ENCODE measurements at regions of chr6 and their contacts with region 1.

Region 1: DNA sequence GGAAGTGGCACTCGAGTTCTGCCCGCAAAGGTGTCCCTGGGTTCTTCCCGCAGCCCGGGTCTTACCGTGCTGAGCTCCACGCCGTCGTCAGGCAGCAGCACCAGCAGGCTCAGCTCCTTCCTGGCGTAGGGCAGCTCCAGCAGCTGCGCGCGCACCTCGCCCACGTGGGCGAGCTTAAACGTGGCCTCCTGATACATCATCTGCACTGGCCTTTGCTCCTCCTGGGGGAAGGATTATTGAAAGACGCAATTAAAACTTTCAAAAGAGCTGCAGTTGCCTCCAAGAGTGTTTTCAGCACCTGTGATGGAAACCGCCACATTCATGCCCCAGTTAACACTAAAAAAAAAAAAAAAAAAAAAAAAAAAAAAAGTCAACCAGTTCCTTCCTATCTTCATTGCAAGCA is 11.3 kb downstream of the SERPINB9 start:
- DNase-seq: peak; percentile 99
- H3K4me3 ChIP-seq: peak overlapping the region; percentile 73
- H3K27ac ChIP-seq: peak overlapping the region; percentile 97
- H3K4me1 ChIP-seq: peaks cover 91% of the 10 kb centered on the region
- CTCF ChIP-seq: no peak

Region 2: DNA sequence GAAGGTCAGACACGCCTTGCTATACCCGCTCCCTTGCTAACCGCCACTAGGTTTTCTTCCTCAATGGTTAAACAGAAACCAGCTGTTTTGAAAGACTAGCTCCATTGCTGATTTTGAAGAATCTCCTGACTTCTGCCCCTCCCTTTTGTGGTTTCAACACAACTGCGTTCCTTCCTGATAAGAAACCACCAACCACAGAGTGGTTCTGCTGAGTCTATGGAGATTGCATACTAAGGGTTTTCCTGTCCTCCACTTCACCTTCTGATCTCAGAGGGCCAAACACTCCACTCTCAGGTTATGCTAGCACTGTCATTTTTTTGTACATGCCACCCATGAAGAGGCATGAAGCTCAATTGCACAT is 348.9 kb before region 1 on chr6:
- CTCF ChIA-PET with region 1: no interaction called
- POLR2A ChIA-PET with region 1: no interaction called
- intact Hi-C with region 1: no loop called
- DNase-seq: no peak
- H3K4me3 ChIP-seq: no peak overlapping the region
- H3K27ac ChIP-seq: no peak overlapping the region
- H3K4me1 ChIP-seq: no peaks in the 10 kb centered on the region
- CTCF ChIP-seq: no peak

Region 3: DNA sequence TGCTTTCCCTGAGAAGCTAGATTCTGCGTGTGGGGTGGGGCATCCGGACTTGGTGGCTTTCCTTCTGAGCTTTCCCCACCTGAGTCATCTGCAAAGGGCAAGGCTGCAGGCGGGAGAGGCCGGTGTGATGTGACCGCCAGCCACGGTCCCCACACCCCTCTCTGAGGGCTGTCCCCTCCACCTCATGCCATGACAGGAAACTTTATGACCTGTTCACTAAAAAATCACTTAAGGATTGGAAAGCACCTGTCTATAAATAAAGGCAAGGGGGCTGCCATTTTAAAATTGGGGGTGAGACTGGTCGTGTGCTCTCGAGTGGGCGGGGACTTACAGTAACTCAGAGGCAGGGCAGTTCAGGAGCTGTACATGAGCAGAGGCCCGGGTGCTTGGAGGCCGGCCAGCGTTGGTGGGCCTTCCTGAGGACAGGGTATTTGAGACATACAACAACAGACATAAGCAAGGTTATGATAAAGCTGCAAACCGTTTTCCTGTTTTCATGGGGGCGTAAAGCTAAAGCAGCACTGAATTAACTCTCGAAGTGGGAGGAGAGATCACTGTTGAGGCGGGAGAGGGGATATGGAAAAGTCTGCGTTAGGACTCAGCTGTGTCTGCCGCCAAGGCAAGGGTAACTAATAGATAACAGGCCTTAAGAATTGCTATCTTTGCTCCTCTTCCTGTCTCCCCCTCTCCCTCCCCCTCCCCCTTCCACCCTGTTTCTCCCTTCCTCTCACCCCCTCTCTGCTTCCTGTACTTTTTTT is 34.0 kb before region 1 on chr6:
- CTCF ChIA-PET with region 1: no interaction called
- POLR2A ChIA-PET with region 1: interaction called, 18 read pairs
- intact Hi-C with region 1: loop called (anchors 1 kb)
- DNase-seq: peak; percentile 70
- H3K4me3 ChIP-seq: peak overlapping the region; percentile 39
- H3K27ac ChIP-seq: peak overlapping the region; percentile 99
- H3K4me1 ChIP-seq: peaks cover 96% of the 10 kb centered on the region
- CTCF ChIP-seq: no peak

Region 4: DNA sequence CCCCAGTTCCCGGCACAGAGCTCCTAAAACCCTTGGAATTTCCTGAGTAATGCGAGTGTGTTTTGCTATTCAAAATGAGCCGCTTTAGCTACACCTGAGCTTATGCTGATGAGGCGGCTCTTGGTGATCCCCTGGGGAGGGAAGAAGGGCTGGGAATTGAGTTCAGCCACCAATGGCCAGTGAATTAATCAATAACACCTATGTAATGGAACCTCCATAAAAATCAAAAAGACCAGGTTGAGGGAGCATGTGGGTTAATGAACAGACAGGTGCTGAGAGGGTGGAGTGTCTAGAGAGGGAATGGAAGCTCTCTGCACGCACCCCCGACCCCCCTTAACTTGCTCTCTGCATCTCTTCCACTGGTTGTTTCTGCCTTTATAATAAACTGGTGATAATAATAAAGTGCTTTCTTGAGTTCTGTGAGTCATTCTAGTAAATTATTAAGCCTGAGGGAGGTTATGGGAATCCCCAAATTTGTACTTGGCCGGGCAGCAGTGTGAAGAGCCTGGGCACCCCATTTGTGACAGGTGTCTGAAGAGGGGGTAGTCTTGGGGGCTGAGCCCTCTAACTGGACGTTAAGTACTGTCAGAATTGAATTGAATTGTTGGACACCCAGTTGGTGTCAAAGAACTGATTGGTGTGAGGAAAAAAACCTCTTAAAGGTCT is 25.5 kb before region 1 on chr6:
- CTCF ChIA-PET with region 1: interaction called, 4 read pairs
- POLR2A ChIA-PET with region 1: interaction called, 18 read pairs
- intact Hi-C with region 1: loop called (anchors 1 kb)
- DNase-seq: no peak
- H3K4me3 ChIP-seq: peak overlapping the region; percentile 28
- H3K27ac ChIP-seq: peak overlapping the region; percentile 99
- H3K4me1 ChIP-seq: peaks cover 78% of the 10 kb centered on the region
- CTCF ChIP-seq: no peak

Region 5: GRCh38 chr6:2876210-2877056 is 15.3 kb before region 1 on chr6:
- CTCF ChIA-PET with region 1: interaction called, 3 read pairs
- POLR2A ChIA-PET with region 1: interaction called, 23 read pairs
- intact Hi-C with region 1: no loop called
- DNase-seq: peak; percentile 58
- H3K4me3 ChIP-seq: peak overlapping the region; percentile 67
- H3K27ac ChIP-seq: peak overlapping the region; percentile 79
- H3K4me1 ChIP-seq: peaks cover 88% of the 10 kb centered on the region
- CTCF ChIP-seq: no peak

Region 6: GRCh38 chr6:2911171-2911570 is 19.4 kb after region 1 on chr6:
- CTCF ChIA-PET with region 1: no interaction called
- POLR2A ChIA-PET with region 1: interaction called, 6 read pairs
- intact Hi-C with region 1: loop called (anchors 1 kb)
- DNase-seq: peak; percentile 87
- H3K4me3 ChIP-seq: peak overlapping the region; percentile 43
- H3K27ac ChIP-seq: peak overlapping the region; percentile 87
- H3K4me1 ChIP-seq: peaks cover 57% of the 10 kb centered on the region
- CTCF ChIP-seq: no peak

Measured in OCI-LY7 (cell line).